ENCODE measurements at regions of chr4 and their contacts with region 1.

Region 1: DNA sequence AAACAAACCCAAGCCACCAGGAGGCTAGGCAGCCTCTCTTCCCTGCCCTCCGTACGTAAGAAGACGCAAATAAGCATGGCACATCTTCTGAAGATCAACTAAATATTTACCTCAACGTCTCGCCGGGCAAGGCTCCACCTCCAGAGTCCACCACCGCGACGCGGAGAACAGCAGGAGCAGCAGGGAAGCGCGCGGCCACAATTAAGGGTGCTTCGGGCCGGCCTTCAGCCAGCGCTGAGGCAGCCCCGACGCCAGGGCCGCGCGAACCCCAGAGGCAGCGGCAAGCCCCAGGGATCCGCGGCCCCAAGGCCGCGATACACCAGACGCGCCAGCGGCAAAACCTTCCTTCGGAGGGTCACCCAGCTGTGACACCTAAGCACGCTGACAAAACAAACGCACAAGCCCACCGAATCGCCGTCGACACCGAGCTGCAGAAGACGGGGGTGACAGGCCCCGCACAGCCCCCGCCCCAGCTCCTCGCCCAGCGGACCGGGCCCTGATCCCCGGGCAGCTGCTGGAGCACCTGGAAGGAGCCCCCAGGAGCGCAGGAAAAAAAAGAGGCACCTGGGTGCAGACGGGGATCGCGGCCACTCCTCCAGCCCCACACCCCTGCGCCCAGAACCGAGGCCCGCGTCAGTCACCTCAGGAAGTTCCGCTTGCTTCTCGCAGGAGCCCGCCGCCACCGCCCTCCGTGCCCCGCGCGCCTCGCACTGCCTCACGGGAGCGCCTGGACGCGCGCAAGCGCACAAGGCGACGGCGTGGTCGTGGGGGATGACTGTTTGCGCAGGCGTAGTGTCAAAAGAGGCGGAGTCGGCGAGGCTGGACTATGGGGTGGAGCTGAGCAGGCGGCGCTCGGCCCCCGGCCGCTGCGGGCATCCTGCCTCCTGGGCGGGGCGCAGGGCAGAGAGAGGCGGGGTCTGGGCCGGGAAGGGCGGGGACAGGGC is at the starts of genes HAUS3 and POLN:
- DNase-seq: peak; percentile 100
- H3K4me3 Mint-ChIP-seq: peak within 1 kb of the TSS; percentile 97
- H3K27ac Mint-ChIP-seq: peak within 1 kb of the TSS; percentile 89
- H3K4me1 Mint-ChIP-seq: peaks cover 54% of the 10 kb centered on the region
- H3K27me3 Mint-ChIP-seq: no peaks in the 10 kb centered on the region
- total RNA-seq, gene HAUS3: 20.2 to 20.3 TPM
- total RNA-seq, gene POLN: 2.7 to 4.0 TPM

Region 2: GRCh38 chr4:2008875-2009703 is 232.6 kb before region 1 on chr4 and contains the start of gene NELFA:
- CTCF ChIA-PET with region 1: no interaction called
- POLR2A ChIA-PET with region 1: no interaction called
- intact Hi-C with region 1: loop called (anchors 1 kb)
- DNase-seq: peak; percentile 96
- H3K4me3 Mint-ChIP-seq: peak within 1 kb of the TSS; percentile 88
- H3K27ac Mint-ChIP-seq: peak within 1 kb of the TSS; percentile 87
- H3K4me1 Mint-ChIP-seq: peaks cover 29% of the 10 kb centered on the region
- H3K27me3 Mint-ChIP-seq: no peaks in the 10 kb centered on the region
- total RNA-seq, gene NELFA: 39.5 to 41.5 TPM

Region 3: DNA sequence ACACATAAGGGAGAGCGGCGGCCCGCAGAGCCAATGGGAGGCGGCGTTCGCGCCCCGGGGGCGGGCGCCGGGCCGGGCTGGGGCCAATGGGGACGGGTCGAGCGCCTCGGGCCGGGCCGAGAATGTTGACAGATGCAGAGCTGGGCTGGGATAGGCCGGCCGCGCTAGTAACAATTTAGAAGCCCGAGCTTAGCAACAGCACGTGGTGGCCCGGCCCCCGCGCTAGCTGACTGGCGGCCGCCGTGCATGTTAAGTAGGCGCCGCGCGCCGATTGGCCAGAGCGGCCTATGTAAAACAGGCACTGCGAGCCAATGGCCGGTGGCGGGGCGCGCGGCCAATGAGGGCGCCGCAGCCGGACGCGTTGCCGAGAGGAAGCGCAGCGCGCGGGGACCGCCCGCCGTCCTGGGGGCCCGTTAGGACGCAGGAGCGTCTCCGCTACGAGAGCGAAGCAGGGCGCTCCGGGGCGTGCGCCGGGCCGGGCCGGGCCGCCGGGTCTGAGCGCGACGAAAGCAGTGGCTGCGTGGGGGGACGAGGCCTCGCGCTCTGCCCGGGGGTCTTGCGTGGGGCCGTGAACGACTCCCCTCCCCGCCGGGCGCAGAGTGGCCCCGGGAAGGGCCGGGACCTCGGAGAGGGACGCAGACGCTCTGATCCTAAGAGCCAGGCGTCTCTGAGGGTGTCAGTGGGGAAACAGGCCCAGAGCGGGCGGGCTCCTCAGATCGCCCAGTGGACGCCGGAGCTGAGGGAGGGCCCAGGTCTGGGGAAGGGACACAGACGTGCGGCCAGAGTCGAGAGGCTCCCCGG is 20.7 kb after region 1 on chr4:
- CTCF ChIA-PET with region 1: interaction called, 5 read pairs
- POLR2A ChIA-PET with region 1: interaction called, 7 read pairs
- intact Hi-C with region 1: loop called (anchors 1 kb)
- DNase-seq: peak; percentile 99
- H3K4me3 Mint-ChIP-seq: peak overlapping the region; percentile 62
- H3K27ac Mint-ChIP-seq: peak overlapping the region; percentile 54
- H3K4me1 Mint-ChIP-seq: peaks cover 3% of the 10 kb centered on the region
- H3K27me3 Mint-ChIP-seq: no peaks in the 10 kb centered on the region

Region 4: DNA sequence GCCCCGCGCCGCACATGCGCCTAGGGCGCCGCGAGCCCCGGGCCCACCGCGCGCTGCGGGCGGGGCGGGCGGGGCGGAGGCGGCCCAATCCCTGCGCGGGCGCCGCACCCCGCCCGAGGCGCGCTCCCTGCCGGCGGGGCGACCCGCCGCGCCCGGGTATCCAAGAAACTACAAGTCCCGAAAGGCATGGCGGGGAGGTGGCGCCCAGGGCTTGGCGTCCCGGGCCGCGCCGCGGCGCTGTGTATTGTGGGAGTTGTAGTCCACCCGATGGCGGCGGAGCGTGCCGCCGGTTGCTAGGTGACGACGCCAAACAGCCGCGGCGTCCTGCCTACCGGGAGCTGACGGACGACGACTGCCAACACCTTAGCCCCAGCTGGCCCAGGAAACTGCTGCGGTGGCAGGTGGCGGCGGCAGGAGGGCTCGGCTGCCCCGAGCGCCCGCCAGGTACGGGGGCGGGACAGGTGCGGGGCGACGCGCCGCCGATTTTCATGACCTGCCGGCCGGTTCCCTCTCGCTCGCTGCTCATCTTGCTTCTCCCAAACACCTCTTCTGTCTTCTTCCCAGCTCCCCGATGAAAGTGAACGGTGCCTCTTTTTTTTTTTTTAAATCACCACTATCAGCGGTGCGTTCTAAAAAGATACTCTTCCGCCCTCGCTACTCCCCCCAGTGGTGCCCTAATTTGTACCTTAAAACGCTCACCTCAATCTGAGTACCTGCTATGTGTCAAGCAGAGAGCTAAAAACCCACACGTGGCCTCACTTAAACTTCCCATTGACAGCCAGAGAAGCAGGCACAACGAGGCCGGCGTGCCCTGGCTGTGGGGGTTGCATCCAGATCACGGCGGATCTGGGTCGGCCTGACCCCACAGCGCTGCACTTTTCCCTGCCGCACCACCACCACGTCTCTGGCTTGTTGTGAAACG is 177.2 kb after region 1 on chr4 and contains the start of gene CFAP99:
- CTCF ChIA-PET with region 1: interaction called, 5 read pairs
- POLR2A ChIA-PET with region 1: interaction called, 11 read pairs
- intact Hi-C with region 1: loop called (anchors 1 kb)
- DNase-seq: peak; percentile 99
- H3K4me3 Mint-ChIP-seq: peak within 1 kb of the TSS; percentile 89
- H3K27ac Mint-ChIP-seq: peak within 1 kb of the TSS; percentile 74
- H3K4me1 Mint-ChIP-seq: peaks cover 33% of the 10 kb centered on the region
- H3K27me3 Mint-ChIP-seq: peaks cover 13% of the 10 kb centered on the region
- total RNA-seq, gene CFAP99: not detected

Region 5: DNA sequence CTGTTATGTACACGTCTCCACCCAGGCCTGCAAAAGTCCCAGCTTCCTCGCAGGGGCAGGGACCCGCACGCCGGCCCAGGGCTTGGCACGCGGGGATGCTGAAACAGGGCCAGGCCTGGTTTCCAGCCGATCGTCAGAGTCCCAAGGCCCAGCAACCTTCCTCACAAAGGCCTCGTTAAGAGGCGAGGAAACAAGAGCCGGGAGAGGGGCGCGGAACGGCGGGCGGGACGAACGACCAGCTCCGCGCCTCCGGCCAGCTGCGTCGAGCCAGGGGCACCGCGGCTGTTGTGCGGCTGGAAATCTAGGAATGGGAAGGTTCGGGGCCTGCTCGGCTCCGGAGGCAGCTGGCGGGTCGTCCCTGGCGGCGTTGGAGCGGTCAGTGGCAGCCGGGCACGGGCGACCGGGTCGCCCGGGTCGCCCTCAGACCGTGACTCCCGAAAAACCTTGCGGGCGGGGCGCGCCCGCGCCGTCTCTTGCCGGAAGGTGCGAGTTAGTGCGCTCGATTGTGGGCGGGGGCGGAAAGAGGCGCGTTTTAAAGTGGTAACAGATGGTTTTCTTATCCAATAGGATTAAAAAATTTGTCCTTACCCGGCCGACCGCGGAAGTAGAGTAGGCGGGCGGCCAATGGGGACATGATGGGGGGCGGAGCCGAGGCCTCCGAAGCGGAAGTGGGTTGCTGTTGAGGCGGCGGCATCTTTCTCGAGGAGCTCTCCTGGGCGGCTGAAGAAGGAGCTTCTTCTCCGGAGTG is 226.9 kb after region 1 on chr4 and contains the start of gene RNF4:
- CTCF ChIA-PET with region 1: interaction called, 4 read pairs
- POLR2A ChIA-PET with region 1: interaction called, 10 read pairs
- intact Hi-C with region 1: loop called (anchors 1 kb)
- DNase-seq: peak; percentile 98
- H3K4me3 Mint-ChIP-seq: peak within 1 kb of the TSS; percentile 97
- H3K27ac Mint-ChIP-seq: peak within 1 kb of the TSS; percentile 98
- H3K4me1 Mint-ChIP-seq: peaks cover 42% of the 10 kb centered on the region
- H3K27me3 Mint-ChIP-seq: no peaks in the 10 kb centered on the region
- total RNA-seq, gene RNF4: 84.6 to 90.3 TPM

Region 6: GRCh38 chr4:2511645-2512131 is 270.0 kb after region 1 on chr4:
- CTCF ChIA-PET with region 1: no interaction called
- POLR2A ChIA-PET with region 1: no interaction called
- intact Hi-C with region 1: no loop called
- DNase-seq: no peak
- H3K4me3 Mint-ChIP-seq: no peak overlapping the region
- H3K27ac Mint-ChIP-seq: no peak overlapping the region
- H3K4me1 Mint-ChIP-seq: peaks cover 7% of the 10 kb centered on the region
- H3K27me3 Mint-ChIP-seq: no peaks in the 10 kb centered on the region

Region 7: DNA sequence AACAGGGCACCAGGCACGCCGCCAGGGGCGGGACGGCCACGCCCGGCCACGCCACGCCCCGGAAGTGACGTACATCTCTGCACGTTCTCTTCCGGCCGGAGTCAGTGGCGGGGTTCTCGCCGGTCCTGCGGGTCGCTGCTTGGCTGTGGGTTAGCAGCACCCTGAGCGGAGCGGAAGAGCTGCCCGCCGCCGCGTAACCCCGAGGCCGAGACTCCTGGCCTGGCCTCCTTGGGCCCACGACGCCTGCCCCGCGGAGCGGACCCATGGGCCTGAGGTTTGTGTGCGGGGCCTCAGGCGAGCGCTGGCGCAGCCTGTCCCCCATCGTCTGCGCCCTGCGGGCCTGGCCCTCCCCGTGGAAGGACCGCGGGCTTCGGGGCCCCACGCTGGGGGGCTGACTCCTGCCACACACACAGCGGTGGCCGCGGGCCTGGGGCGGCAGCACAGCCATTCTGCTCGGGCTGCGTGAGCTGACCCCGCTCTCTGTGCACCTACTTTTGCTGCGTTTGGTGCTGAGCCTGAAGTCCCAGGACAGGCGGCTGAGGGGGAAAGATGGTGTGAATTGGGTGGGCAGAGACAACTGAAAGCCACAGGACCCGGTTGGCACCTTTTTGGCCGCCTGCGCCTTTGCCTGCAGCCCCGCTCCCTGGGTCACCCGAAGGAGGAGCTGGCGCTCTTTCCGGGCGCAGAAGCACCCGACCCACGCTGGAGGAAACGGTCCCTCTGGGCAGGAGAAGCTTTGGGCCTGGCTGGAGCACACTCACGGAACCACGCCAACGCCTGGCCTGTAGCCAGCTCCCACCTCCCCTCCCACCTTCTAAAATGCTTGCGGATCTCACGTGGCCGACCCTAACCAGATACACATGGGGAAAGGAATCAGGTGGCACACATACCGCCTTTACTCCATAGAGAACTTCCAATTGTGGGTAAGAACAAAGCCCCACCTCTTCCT is 693.4 kb after region 1 on chr4:
- CTCF ChIA-PET with region 1: no interaction called
- POLR2A ChIA-PET with region 1: interaction called, 3 read pairs
- intact Hi-C with region 1: loop called (anchors 10 kb)
- DNase-seq: peak; percentile 97
- H3K4me3 Mint-ChIP-seq: peak overlapping the region; percentile 93
- H3K27ac Mint-ChIP-seq: peak overlapping the region; percentile 95
- H3K4me1 Mint-ChIP-seq: peaks cover 53% of the 10 kb centered on the region
- H3K27me3 Mint-ChIP-seq: no peaks in the 10 kb centered on the region